Endothelial cell of umbilical vein (primary cell): ENCODE measurements at regions of chr6 and their contacts with region 1.

Region 1: GRCh38 chr6:113103634-113104361 is 753.3 kb upstream of the MARCKS start:
- DNase-seq: peak; percentile 88
- H3K4me3 ChIP-seq: peak overlapping the region in 1 of 3 experiments; percentile 12
- H3K27ac ChIP-seq: peak overlapping the region; percentile 98
- H3K4me1 ChIP-seq: peaks cover 27% of the 10 kb centered on the region
- H3K27me3 ChIP-seq: no peaks in the 10 kb centered on the region
- CTCF ChIP-seq: no peak
- POLR2A ChIP-seq: no peak

Region 2: GRCh38 chr6:112752305-112752704 is 351.5 kb before region 1 on chr6:
- CTCF ChIA-PET with region 1: no interaction called
- POLR2A ChIA-PET with region 1: no interaction called
- dilution Hi-C with region 1: no loop called
- intact Hi-C with region 1: no loop called
- DNase-seq: no peak
- H3K4me3 ChIP-seq: no peak overlapping the region
- H3K27ac ChIP-seq: no peak overlapping the region
- H3K4me1 ChIP-seq: no peaks in the 10 kb centered on the region
- H3K27me3 ChIP-seq: no peaks in the 10 kb centered on the region
- CTCF ChIP-seq: no peak
- POLR2A ChIP-seq: no peak

Region 3: DNA sequence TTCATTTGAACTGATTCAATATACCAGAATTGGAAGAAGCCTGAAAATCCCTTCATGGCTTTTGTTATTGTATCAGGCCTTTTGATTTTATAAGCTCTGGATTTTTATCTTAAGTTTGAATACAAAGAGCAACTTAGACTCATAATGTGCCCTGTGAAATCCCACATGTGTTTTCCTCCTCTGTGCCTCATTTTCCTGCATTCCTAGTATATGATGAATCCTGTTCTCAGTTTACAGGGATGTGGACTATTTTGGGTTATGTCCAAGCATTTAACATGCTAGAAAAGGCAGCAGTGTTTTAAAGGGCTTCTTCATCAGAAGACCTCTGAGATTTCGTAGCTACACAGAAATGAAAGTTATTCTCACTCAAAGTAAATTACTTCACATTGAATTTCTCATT is 301.7 kb before region 1 on chr6:
- CTCF ChIA-PET with region 1: no interaction called
- POLR2A ChIA-PET with region 1: no interaction called
- dilution Hi-C with region 1: no loop called
- intact Hi-C with region 1: loop called (anchors 5 kb)
- DNase-seq: peak; percentile 93
- H3K4me3 ChIP-seq: peak overlapping the region in 1 of 3 experiments; percentile 35
- H3K27ac ChIP-seq: peak overlapping the region; percentile 68
- H3K4me1 ChIP-seq: peaks cover 19% of the 10 kb centered on the region
- H3K27me3 ChIP-seq: no peaks in the 10 kb centered on the region
- CTCF ChIP-seq: no peak
- POLR2A ChIP-seq: no peak

Region 4: GRCh38 chr6:113018351-113019151 is 85.2 kb before region 1 on chr6:
- CTCF ChIA-PET with region 1: no interaction called
- POLR2A ChIA-PET with region 1: no interaction called
- dilution Hi-C with region 1: no loop called
- intact Hi-C with region 1: loop called (anchors 1 kb)
- DNase-seq: peak; percentile 96
- H3K4me3 ChIP-seq: peak overlapping the region in 1 of 3 experiments; percentile 5
- H3K27ac ChIP-seq: peak overlapping the region; percentile 96
- H3K4me1 ChIP-seq: peaks cover 24% of the 10 kb centered on the region
- H3K27me3 ChIP-seq: no peaks in the 10 kb centered on the region
- CTCF ChIP-seq: no peak
- POLR2A ChIP-seq: no peak

Region 5: DNA sequence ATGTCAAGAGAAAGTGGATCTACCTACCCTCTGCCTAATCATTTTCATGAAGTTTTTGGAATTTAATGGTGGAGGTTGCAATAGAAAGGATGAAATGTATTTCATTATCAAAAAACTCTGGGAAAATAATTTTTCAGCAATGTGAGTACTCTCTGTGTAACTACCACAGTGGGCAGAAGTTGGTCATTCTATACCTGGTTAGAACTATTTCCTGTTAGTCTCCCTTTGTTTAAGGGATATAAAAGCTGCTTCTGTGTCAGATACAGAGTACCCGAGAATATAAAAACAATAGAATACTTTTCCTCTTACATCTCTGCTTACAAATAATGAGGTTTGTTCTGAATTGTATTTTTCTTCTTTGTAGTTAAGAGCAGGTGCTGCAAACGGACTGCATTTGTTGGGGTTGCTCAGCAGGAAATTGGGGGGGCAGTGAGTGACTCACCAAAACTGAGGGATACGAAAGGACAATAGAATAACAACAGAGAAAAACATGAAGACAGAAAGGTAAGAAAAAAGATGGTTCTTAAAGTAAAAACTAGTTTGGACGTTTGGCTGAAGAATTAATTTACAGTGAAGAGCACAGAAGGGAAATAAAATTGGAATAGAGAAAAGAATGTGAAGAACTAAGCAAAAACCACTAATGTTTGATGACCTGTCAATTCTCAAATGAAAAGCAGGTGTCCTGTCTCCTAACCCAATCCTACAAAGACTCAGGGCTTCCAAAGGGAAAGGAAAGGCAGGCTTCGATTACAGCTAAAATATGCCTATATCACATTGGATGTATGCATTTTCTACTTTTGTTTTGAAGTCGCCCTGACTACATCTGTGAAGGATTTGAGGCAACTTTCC is 53.6 kb before region 1 on chr6:
- CTCF ChIA-PET with region 1: no interaction called
- POLR2A ChIA-PET with region 1: no interaction called
- dilution Hi-C with region 1: no loop called
- intact Hi-C with region 1: loop called (anchors 1 kb)
- DNase-seq: peak; percentile 92
- H3K4me3 ChIP-seq: no peak overlapping the region
- H3K27ac ChIP-seq: peak overlapping the region; percentile 74
- H3K4me1 ChIP-seq: peaks cover 29% of the 10 kb centered on the region
- H3K27me3 ChIP-seq: no peaks in the 10 kb centered on the region
- CTCF ChIP-seq: no peak
- POLR2A ChIP-seq: no peak